ENCODE measurements at regions of chr19 and their contacts with region 1.

Region 1: GRCh38 chr19:15280915-15281683 is 48.9 kb upstream of the EPHX3 start:
- DNase-seq: peak in 3 of 4 experiments; percentile 39 to 66 (median 43)
- ATAC-seq: peak; percentile 91
- H3K4me3 ChIP-seq: no peak overlapping the region
- H3K27ac ChIP-seq: peak overlapping the region; percentile 67; the same call in 2 of the 3 replicates
- H3K4me1 ChIP-seq: peaks cover 16 to 66% of the 10 kb centered on the region in 2 experiments
- H3K27me3 ChIP-seq: no peaks in the 10 kb centered on the region
- CTCF ChIP-seq: peak; percentile 45 to 48 (median 48); a peak in 5 of 6 replicates
- EP300 ChIP-seq: peak; percentile 48; the same call in 1 of the 2 replicates
- POLR2A ChIP-seq: no peak
- RAD21 ChIP-seq: peak in 1 of 2 experiments; percentile 46; a peak in 2 of 4 replicates

Region 2: GRCh38 chr19:15297416-15298224 is 16.5 kb after region 1 on chr19:
- CTCF ChIA-PET with region 1: interaction called, 3 read pairs
- POLR2A ChIA-PET with region 1: interaction called, 34 read pairs
- in situ Hi-C with region 1: no loop called
- intact Hi-C with region 1: no loop called
- DNase-seq: peak in 1 of 4 experiments; percentile 34
- ATAC-seq: peak; percentile 67
- H3K4me3 ChIP-seq: no peak overlapping the region
- H3K27ac ChIP-seq: peak overlapping the region; percentile 37; the same call in 2 of the 3 replicates
- H3K4me1 ChIP-seq: peaks cover 9 to 71% of the 10 kb centered on the region in 2 experiments; a peak in 4 of 5 replicates
- H3K27me3 ChIP-seq: no peaks in the 10 kb centered on the region
- CTCF ChIP-seq: peak in 1 of 3 experiments; percentile 19; a peak in 1 of 6 replicates
- EP300 ChIP-seq: peak; percentile 78; the same call in 1 of the 2 replicates
- POLR2A ChIP-seq: no peak
- RAD21 ChIP-seq: peak; percentile 22 to 49

Region 3: DNA sequence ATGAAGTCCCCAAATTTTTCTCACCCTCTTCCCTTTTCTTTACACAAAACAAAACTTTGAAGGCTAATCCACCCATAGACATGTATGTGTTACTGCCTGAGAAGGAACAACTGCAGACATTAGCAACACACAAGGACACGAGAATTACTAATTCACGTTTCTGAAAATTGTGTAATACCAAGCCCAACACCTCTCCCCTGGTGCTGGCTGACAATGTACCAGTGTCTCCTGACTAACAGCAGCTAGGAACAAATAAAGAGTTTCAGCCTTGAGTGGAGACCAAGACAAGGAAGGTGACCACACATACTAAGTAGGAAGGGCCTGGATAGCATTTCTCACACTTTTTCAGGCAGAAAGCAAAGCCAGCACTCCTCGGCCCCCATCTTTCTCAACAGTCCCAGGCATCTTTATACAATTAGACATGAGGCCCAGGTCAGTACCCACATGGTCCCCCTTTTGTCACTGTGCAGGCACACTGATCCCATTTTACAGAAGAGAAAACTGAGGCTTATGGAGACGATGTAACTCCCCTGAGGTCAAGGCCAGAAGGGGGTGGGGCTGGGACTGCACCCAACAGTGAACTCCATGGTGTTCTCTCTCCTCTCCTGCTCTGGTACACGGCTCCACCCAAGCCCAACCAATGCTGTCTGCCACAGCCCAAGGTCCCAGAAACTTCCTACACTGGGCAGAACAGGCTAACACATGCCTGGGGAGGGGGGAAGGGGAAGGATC is 42.6 kb after region 1 on chr19:
- CTCF ChIA-PET with region 1: no interaction called
- POLR2A ChIA-PET with region 1: no interaction called
- in situ Hi-C with region 1: no loop called
- intact Hi-C with region 1: loop called (anchors 5 kb)
- DNase-seq: peak in 3 of 4 experiments; percentile 28 to 51 (median 42)
- ATAC-seq: peak; percentile 36
- H3K4me3 ChIP-seq: no peak overlapping the region
- H3K27ac ChIP-seq: peak overlapping the region; percentile 8; the same call in 1 of the 3 replicates
- H3K4me1 ChIP-seq: peaks cover 26 to 52% of the 10 kb centered on the region in 2 experiments
- H3K27me3 ChIP-seq: no peaks in the 10 kb centered on the region
- CTCF ChIP-seq: no peak
- EP300 ChIP-seq: no peak
- POLR2A ChIP-seq: no peak
- RAD21 ChIP-seq: no peak